Activated naive CD4-positive, alpha-beta T cell treated with anti-CD3 and anti-CD28 coated beads for 36 hours (primary cell): ENCODE measurements at regions of chr10 and their contacts with region 1.

Region 1: DNA sequence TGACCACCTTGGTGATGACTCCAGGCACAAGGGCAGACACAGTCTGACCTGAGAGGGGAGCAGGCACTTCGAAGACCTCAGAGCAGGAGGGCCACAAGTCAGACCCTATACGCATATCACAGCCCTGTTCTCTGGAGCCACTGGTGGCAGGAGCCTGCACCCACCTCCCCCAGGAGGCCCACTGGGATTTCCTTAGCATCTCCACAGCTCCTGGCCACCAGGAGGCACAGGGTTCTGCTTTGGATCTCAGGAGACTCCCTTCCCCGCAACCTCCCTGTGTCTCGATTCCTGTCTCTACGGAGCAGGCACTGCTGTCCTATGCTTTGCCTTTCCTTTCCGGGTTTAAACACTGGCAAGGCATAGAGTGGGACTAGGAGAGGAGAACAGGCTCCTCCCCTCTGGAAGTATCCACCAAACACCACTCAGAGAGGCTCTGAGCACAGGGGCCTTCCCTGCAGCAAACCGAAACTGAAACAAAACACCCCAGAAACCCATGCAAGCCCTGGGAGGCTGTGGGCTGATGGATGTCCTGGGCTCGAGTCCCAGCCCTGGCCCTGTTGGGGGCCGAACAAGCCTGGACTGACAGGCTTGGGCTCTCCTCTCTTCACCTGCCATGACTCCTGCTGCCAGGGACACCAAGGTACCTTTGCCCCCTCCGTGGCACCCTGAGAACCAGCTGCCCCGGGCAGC is 166.3 kb downstream of the NEURL1 start:
- DNase-seq: peak; percentile 78
- H3K4me3 Mint-ChIP-seq: peak overlapping the region; percentile 84
- H3K27ac Mint-ChIP-seq: peak overlapping the region; percentile 71
- H3K4me1 Mint-ChIP-seq: peaks cover 7% of the 10 kb centered on the region
- H3K27me3 Mint-ChIP-seq: no peaks in the 10 kb centered on the region

Region 2: DNA sequence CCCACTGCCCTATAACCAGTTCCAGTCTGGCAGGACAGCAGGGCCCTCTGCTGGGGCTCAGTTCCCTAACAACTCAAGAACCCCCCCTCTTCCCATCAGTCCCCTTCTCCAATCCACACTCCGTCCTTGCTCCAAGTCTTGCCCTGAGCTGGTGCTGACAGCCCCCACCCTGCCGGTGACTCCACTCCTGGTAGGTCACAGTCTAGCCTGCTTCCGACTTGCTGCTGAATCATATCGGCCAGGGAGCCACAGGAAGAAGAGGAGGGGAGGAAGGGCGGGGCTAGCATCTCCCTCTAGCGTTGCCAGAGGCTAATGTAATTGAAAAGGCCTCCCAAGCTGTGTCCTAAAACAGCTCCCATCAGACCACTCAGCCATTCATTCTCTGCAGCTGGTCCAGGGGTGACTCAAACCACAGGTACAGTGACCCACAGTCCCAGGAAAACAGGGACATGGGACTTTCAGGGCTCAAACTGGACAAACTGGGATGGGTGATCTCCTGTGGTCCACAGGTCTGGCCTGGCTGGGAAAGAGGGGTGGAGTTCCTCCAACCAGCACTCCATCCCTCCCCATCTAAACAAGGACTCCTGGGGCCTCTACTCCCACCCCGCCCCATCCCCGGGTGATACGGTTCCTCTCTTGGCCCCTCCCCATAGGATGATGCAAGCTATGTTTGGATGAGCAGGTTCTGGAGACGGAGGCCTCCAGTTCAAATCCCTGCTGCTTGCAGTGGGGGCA is 36.8 kb after region 1 on chr10:
- CTCF ChIA-PET with region 1: no interaction called
- intact Hi-C with region 1: loop called (anchors 1 kb)
- DNase-seq: peak; percentile 92
- H3K4me3 Mint-ChIP-seq: peak overlapping the region; percentile 28
- H3K27ac Mint-ChIP-seq: no peak overlapping the region
- H3K4me1 Mint-ChIP-seq: peaks cover 22% of the 10 kb centered on the region
- H3K27me3 Mint-ChIP-seq: no peaks in the 10 kb centered on the region

Region 3: DNA sequence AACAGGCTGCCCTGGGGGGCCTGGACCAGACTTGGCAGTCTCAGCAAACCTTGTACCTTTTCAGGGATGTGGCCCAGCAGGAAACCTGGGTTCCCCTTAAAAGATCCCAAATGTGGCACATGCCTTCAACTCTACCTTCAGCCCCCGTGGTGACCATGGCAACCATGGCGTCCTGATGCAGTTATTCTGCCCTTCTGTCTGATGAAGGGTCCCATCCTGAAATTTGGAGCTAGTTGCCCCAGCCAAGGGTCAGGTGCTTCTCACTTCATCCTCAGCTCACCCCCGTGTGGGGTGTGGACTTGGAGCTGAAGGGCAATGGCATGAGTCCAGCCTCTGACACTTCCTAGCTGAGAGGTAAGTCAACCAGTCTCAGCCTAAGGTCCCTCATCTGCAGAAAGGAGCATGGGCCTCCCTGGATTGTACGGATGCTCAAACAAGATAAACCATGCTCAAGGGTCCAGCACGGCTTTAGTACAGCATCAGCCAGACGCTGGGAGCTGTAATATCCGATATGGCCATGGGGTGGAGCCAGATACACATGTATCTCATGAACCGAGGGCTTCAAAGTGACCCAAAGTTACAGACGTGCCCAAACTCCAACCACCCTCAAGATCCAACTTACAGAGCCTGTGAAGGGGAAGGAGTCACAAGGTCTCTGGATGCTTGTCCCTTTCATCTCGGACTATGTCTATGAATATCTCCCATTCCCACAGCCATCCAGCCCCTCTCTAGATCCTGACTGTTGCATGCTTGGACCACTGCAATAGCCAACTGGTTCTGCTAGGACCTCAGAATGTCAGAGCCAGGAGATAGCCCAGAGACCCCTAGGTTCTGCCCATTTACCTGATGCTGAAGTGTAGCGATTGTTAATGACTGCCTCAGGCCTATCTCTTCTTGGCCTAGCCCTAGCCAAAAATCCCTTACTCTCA is 53.0 kb after region 1 on chr10:
- CTCF ChIA-PET with region 1: no interaction called
- intact Hi-C with region 1: no loop called
- DNase-seq: peak; percentile 92
- H3K4me3 Mint-ChIP-seq: no peak overlapping the region
- H3K27ac Mint-ChIP-seq: no peak overlapping the region
- H3K4me1 Mint-ChIP-seq: no peaks in the 10 kb centered on the region
- H3K27me3 Mint-ChIP-seq: no peaks in the 10 kb centered on the region